ENCODE measurements at regions of chr17 and their contacts with region 1.

Region 1: DNA sequence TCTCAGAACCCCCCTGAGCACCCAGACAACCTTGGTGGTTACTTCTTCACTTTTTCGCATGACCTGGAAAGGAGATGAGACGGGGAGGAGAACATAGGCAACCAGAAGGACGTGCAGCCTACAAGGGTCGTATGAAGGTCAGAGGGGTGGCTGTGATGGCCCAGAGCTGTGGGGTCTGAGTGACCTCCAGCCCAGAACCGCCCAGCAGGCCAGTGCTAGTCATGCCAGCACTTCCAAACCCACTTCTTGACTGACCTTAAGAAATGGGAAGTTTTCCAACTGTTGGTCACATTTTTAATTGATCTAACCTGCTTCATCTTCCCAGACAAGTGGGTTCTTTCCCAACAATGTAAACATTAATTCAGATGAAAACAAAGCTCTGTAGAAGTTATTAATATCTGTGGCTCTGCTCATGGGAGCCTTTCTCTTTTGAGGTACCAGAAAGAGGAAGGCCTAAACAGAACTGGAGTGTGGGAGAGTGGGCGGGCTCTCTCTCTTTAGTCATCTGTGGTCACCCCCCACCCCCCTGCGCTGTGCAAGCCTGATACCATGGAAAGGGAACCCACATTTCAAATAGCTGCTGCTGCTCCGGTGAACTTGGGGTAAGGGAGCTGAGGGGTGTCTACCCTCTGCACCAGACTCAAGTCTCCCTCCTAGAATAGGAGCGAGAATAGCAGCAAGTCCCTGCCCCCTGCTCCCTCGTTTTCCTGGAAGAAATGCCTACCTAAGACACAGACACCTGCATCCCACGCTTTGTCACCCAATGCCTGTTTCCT is 101.6 kb downstream of the RAB11FIP4 start:
- DNase-seq: no peak
- ATAC-seq: no peak
- H3K4me3 ChIP-seq: no peak overlapping the region
- H3K27ac ChIP-seq: no peak overlapping the region
- H3K4me1 ChIP-seq: peaks cover 4% of the 10 kb centered on the region; the same call in 1 of the 2 replicates
- H3K27me3 ChIP-seq: no peaks in the 10 kb centered on the region
- CTCF ChIP-seq: no peak

Region 2: GRCh38 chr17:31130286-31131224 is 362.5 kb before region 1 on chr17:
- CTCF ChIA-PET with region 1: interaction called, 11 read pairs
- POLR2A ChIA-PET with region 1: no interaction called
- intact Hi-C with region 1: no loop called
- DNase-seq: no peak
- ATAC-seq: no peak
- H3K4me3 ChIP-seq: no peak overlapping the region
- H3K27ac ChIP-seq: no peak overlapping the region
- H3K4me1 ChIP-seq: no peaks in the 10 kb centered on the region
- H3K27me3 ChIP-seq: no peaks in the 10 kb centered on the region
- CTCF ChIP-seq: no peak

Region 3: GRCh38 chr17:31581022-31581490 is 88.0 kb after region 1 on chr17:
- CTCF ChIA-PET with region 1: no interaction called
- POLR2A ChIA-PET with region 1: no interaction called
- intact Hi-C with region 1: no loop called
- DNase-seq: peak; percentile 85
- ATAC-seq: peak; percentile 85
- H3K4me3 ChIP-seq: peak overlapping the region; percentile 50; the same call in 1 of the 2 replicates
- H3K27ac ChIP-seq: peak overlapping the region; percentile 95
- H3K4me1 ChIP-seq: peaks cover 42% of the 10 kb centered on the region
- H3K27me3 ChIP-seq: no peaks in the 10 kb centered on the region
- CTCF ChIP-seq: no peak

Region 4: DNA sequence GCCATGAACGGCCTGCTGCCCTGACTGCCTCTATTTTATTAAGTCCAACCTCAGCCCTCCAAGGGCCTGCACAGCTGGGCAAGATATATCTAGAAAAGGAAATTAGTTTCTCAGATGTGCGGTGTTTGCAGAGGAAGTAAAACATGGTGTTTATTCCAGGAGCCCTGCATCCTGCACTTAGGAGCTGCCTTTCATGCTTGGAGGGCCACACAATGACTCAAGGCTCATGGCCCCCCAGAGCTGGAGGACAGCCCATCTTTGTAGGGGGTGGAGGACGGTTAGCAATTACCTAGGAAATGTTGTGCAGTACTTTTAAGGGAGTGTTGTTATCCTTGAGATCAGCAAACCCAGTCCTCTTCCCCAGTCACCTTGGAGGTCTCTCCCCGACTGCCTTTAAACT is 285.5 kb after region 1 on chr17:
- CTCF ChIA-PET with region 1: no interaction called
- POLR2A ChIA-PET with region 1: no interaction called
- intact Hi-C with region 1: no loop called
- DNase-seq: no peak
- ATAC-seq: no peak
- H3K4me3 ChIP-seq: no peak overlapping the region
- H3K27ac ChIP-seq: no peak overlapping the region
- H3K4me1 ChIP-seq: no peaks in the 10 kb centered on the region
- H3K27me3 ChIP-seq: no peaks in the 10 kb centered on the region
- CTCF ChIP-seq: no peak